Cardiac septum (tissue), 1 donor: ENCODE measurements at regions of chr2 and their contacts with region 1.

Region 1: DNA sequence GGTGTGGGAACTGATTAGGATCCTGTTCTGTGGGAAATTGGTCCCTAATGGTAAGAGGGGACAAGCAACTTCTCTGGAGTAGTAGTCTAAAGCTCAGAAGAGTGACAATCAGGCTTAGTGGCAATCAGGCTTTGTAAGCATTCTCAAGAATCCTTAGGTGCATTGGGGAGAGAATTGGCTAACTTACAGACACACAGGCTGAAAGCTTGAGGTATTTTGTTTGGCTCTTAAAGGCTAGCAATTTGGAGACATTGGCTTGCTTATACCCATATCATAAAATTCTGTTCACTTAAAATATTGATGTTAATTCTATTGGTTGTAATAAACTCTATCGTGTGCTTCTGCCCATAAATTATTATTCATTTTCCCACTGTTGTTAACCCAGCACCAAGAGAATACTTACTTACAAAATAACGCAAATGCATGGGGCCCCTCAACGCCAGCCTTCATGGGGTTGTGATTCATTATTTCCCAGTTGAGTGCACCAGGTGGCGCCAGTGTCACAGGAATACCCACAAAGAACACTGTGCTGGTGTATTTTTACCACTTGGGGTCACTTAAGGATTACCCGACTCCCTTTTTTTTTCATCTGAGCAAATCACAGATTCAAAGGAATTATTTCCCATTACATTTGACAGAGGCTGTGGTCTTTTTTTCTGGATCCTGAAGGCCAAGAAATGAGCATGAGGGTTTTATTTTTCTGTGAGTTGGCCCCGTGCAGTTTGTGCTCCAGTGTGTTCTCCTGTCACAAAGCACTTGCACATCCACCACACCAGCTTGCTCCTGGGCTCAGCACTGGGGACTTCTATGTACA is 45.5 kb downstream of the DDX1 start:
- DNase-seq: no peak

Region 2: DNA sequence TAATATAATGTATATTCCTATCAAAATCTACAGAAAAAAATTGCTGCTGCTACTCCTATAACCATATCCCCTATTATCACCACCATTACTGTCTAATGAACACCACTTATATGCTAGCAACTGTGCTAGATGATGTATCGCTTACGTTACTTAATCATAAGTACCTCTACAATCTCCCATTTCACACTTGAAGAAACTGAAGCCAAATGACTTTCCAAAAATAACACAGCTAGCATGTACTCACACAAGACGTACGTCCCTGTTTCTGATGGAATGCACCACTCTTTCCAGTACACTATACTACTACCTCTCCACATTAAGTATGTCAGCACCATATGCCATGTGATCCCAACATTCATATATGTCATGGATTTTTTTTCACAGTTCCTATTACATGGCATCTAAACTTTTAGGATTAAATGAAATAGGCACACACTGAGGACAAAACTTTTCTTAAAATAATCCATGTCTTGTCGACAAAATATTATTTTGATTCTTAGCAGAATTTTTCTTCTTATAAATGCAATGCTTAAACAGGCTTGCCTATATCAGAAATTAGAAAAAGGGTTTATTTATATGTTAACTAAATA is 188.8 kb before region 1 on chr2:
- intact Hi-C with region 1: no loop called
- DNase-seq: no peak

Region 3: DNA sequence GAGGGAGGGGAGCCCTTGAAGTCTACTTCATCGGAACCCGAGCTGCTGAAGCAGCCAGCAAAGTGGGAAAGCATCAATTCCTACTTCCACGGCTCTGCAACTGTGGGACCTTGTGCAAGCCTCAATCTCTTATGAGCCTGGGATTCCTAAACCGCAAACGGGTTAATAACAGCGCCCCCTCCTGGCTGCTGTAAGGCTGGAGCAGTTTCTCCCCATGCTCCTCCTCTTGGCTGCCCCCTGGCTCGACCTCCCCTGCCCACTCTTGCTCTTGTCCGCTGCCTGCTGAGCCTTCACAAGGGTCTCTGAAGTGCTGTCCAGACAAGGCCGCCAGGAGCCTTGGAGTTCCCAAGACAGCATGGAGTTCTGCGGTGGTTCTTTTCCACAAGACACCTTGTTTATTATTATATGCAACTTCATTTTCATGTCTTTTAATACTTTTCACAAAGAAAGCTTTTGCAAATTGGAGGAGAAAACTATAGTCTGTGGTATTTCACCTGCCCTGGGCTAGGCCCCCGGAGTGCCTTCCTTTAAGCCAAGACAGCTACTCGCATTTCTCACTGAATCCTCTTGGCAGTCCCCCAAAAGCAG is 111.7 kb after region 1 on chr2:
- intact Hi-C with region 1: loop called (anchors 5 kb)
- DNase-seq: peak; percentile 57

Region 4: DNA sequence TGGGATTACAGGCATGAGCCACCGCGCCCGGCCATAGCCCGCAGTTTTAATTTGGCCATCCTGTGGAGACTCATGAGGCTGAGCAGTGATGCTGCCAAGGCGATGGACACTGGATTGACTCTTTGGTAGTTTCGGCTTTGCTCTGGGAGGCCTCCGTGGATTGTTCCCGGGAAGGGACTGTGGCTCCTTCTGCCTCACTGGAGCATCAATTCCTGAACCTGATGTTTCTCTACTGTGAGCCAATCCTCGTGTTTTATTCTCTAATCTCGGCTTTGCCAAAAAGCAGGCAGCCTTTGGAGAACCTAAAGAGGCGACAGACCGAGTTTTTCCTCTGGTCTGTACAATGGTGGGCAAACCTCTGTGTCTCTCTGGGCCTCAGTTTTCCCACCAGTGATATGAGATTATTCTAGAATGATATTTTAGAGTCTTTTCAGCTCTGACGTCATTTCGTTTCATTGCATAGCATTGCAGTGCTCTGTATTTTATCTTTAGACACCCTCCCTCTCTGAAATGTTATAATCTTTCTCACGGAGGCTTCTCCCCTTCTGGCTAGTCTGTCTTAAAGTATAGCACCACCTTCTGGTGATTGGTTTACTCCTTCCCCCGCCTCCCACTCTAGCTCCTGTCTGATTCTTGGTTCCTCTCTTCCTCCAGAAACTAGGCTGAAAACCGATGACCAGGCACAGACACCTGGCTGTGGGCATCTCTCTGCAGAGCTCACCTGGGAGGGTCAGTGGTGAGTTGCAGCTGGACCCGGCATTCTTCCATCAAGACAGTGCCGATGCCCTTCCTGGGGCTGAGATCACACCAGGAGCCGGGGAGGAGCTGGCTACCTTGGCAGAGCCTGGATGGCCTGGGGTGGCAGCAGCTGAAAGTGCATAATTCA is 644.5 kb after region 1 on chr2:
- intact Hi-C with region 1: loop called (anchors 2 kb)
- DNase-seq: no peak

Region 5: DNA sequence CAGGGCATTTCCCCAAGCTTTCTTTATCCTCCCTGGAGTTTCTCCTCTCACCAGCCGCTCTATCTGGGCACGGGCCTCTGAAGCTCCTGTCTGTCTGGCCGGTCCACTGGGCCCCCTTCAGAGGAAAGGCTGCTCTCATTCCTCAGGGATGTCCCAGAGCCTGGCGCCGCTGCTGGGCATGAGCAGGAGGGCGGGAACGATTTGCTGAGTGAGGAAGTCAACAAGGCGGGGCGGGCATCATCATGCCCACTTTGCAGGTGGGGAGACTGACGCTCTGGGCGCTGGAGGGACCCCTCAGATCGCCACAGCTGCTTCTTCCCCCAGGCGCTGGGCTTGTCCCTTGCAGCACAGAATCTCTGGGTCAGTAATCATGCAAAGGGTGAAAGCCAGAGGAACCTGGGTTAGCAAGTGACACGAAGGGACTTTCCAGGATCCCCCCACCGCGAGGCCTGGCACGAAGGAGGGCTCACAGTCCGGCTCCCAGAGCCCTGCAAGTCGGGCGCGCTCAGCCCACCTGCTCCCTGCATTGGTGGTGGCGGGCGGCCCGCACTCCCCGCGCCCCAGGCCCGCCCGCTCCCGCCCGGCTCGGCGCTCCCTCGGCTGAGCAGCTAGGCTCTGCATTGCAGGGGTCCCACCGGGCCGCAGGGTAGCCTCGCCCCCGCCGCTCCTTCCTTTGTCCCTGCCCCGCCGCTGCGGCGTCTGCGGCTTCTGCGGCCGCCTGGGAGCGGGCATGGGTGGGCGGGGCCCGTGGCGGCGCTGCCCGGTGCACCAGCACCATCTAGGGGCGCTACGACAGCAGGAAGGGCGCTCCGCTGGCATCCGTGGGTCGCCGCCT is 870.7 kb after region 1 on chr2:
- intact Hi-C with region 1: loop called (anchors 5 kb)
- DNase-seq: no peak